Panc1 (cell line): ENCODE measurements at regions of chr6 and their contacts with region 1.

Region 1: DNA sequence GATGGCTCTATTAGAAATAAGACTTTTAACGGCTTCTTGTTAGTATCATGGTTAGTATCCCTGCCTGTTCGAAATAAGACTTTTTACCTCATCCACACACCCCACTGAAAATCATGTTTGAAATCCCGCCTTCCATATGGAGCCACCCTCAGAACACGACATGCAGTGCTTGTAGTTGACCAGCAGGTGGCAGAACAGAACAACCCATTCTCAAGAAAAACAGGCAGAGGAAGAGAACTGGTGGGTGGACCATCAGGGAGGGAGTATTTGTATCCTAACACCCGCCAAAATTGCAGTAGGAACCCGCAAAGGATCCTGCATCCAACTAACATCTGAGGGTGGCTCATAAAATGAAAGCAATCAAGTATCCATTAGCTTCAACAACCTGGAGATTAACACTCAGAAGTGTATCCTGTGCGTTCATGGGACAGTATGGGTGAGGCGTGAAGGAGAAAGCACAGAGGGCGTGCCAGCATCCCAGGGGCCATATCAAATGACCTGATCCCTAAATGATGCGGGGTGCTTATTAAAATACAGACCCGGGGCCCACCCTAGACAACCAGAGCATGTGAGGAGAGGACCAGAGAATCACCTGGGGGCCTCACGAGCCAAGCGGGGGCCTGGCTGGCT is 89.6 kb upstream of the NHSL1 start:
- DNase-seq: peak; percentile 74
- ATAC-seq: peak; percentile 50
- H3K4me3 ChIP-seq: no peak overlapping the region
- H3K27ac ChIP-seq: no peak overlapping the region
- H3K4me1 ChIP-seq: peaks cover 24% of the 10 kb centered on the region
- H3K27me3 ChIP-seq: no peaks in the 10 kb centered on the region
- CTCF ChIP-seq: peak; percentile 93

Region 2: DNA sequence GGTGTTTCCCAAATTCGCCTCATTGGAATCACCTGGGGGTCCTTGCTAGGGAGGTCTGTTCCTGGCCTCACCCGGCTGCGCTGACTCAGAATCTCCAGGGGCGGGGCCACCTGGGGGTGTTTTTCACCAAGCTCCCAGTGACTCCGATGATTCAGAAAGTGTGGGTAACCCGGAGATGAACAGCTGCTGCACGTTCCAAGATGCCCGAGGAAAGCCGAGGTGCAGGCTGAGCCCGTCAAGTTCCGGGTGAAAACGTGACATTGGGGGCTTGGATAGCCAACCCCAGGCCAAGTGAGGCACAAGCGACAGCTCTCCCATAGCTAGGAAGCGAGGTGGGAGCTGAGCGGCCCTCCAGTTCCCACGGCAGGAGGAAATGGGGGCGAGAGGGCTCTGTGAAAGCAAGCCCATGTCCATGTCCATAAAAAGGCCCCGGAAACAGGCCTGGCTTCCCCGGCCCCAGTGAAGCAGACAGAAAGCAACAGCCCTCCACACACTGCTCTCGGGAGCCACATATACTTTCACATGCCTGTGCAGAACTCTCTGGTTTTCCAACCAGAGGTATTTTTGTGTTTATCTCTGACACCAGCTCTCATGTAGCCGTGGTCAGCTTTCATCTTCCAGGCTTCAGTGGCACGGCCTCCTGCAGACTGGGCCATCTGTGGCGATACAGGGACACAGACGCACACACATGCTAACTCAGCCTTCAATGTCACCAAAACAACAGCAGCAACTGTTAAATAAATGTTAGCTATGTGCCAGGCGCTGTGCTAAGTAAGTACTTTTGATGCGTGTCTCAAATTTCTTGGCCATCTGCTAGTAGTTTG is 94.0 kb after region 1 on chr6:
- CTCF ChIA-PET with region 1: no interaction called
- POLR2A ChIA-PET with region 1: no interaction called
- in situ Hi-C with region 1: no loop called
- intact Hi-C with region 1: loop called (anchors 10 kb)
- DNase-seq: no peak
- ATAC-seq: peak; percentile 87
- H3K4me3 ChIP-seq: peak overlapping the region; percentile 25 to 58
- H3K27ac ChIP-seq: peak overlapping the region; percentile 83
- H3K4me1 ChIP-seq: peaks cover 15% of the 10 kb centered on the region
- H3K27me3 ChIP-seq: no peaks in the 10 kb centered on the region
- CTCF ChIP-seq: no peak